Endothelial cell of umbilical vein (primary cell): ENCODE measurements at regions of chr2 and their contacts with region 1.

Region 1: DNA sequence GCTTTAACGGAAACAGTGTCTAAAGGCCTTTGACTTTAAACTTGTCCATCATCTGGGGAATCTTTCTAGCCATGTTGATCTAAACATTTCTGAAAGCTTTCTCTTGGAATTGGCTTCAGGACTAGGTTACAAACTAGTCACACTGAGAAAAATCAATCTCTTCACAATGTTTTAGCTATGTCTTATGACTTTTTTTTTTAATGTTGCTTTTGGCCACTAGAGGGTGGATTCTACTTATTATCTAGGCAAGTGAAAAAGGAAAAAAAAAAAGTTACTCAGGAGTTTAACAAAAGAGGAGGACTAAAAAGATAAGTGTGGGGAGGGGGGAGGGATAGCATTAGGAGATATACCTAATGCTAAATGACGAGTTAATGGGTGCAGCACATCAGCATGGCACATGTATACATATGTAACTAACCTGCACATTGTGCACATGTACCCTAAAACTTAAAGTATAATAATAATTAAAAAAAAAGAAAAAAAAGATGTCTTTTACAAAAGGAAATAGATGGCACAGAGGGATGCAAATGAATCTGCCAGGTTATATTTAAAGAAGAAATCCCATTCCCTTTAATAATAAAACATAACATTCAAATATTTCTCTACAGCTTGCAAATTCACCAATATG is 160.4 kb upstream of the PID1 start:
- DNase-seq: peak; percentile 54
- H3K4me3 ChIP-seq: no peak overlapping the region
- H3K27ac ChIP-seq: no peak overlapping the region
- H3K4me1 ChIP-seq: no peaks in the 10 kb centered on the region
- H3K27me3 ChIP-seq: no peaks in the 10 kb centered on the region
- CTCF ChIP-seq: peak; percentile 23 to 30
- POLR2A ChIP-seq: no peak

Region 2: GRCh38 chr2:227884511-227884947 is 1546.9 kb before region 1 on chr2:
- CTCF ChIA-PET with region 1: no interaction called
- POLR2A ChIA-PET with region 1: no interaction called
- dilution Hi-C with region 1: no loop called
- intact Hi-C with region 1: loop called (anchors 10 kb)
- DNase-seq: peak; percentile 77
- H3K4me3 ChIP-seq: no peak overlapping the region
- H3K27ac ChIP-seq: no peak overlapping the region
- H3K4me1 ChIP-seq: peaks cover 4% of the 10 kb centered on the region
- H3K27me3 ChIP-seq: no peaks in the 10 kb centered on the region
- CTCF ChIP-seq: peak; percentile 95 to 96
- POLR2A ChIP-seq: no peak

Region 3: GRCh38 chr2:229445019-229445418 is 13.6 kb after region 1 on chr2:
- CTCF ChIA-PET with region 1: interaction called, 22 read pairs
- POLR2A ChIA-PET with region 1: no interaction called
- dilution Hi-C with region 1: no loop called
- intact Hi-C with region 1: no loop called
- DNase-seq: peak; percentile 87
- H3K4me3 ChIP-seq: no peak overlapping the region
- H3K27ac ChIP-seq: peak overlapping the region; percentile 56
- H3K4me1 ChIP-seq: peaks cover 8% of the 10 kb centered on the region
- H3K27me3 ChIP-seq: peaks cover 0 to 2% of the 10 kb centered on the region in 2 experiments
- CTCF ChIP-seq: no peak
- POLR2A ChIP-seq: no peak

Region 4: GRCh38 chr2:229462144-229462543 is 30.7 kb after region 1 on chr2:
- CTCF ChIA-PET with region 1: interaction called, 12 read pairs
- POLR2A ChIA-PET with region 1: no interaction called
- dilution Hi-C with region 1: no loop called
- intact Hi-C with region 1: no loop called
- DNase-seq: no peak
- H3K4me3 ChIP-seq: no peak overlapping the region
- H3K27ac ChIP-seq: no peak overlapping the region
- H3K4me1 ChIP-seq: peaks cover 3% of the 10 kb centered on the region
- H3K27me3 ChIP-seq: no peaks in the 10 kb centered on the region
- CTCF ChIP-seq: no peak
- POLR2A ChIP-seq: no peak

Region 5: DNA sequence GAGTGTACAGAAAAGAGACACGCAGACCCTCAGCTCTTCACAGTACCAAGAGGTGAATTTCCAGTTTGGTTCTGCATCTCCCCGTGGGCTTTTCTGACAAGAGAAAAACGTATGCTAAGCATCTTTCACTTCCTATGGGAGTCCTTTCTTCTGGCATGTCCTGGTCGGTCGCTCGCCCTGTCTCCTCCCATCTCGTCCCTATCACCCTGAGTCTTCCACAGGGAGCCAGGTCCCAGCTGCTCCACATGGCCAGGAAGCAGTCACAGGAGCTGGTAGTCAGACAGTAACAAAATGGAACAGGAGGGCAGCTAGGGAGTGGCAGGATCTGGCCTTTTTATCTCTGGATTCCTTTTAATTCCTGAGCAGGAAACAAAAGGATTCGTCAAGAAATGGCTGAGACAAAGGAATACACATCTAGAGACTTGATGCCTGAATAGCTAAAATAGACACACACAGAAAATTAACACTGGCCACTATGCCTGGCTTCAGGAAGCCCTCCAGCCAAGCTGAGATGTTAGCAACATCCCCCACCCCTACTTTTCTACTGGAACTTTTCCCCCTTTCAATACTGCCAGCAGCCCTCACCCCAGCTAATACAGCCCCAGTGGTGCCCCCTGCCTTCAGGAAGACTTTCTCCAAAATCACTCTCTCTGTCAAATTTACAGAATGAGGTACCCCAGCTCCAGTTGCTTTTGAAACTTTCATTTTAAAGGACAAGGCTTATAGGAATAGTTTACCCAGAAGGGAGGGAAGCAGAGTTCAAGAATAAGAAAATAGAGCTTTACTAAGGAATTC is 146.8 kb after region 1 on chr2:
- CTCF ChIA-PET with region 1: interaction called, 403 read pairs
- POLR2A ChIA-PET with region 1: no interaction called
- dilution Hi-C with region 1: no loop called
- intact Hi-C with region 1: no loop called
- DNase-seq: no peak
- H3K4me3 ChIP-seq: no peak overlapping the region
- H3K27ac ChIP-seq: no peak overlapping the region
- H3K4me1 ChIP-seq: no peaks in the 10 kb centered on the region
- H3K27me3 ChIP-seq: no peaks in the 10 kb centered on the region
- CTCF ChIP-seq: no peak
- POLR2A ChIP-seq: no peak

Region 6: GRCh38 chr2:229714736-229715541 is 283.5 kb after region 1 on chr2:
- CTCF ChIA-PET with region 1: interaction called, 4 read pairs
- POLR2A ChIA-PET with region 1: no interaction called
- dilution Hi-C with region 1: no loop called
- intact Hi-C with region 1: loop called (anchors 5 kb)
- DNase-seq: peak; percentile 50
- H3K4me3 ChIP-seq: peak overlapping the region in 2 of 3 experiments; percentile 18 to 20
- H3K27ac ChIP-seq: no peak overlapping the region
- H3K4me1 ChIP-seq: peaks cover 6% of the 10 kb centered on the region
- H3K27me3 ChIP-seq: peaks cover 22 to 41% of the 10 kb centered on the region in 2 experiments
- CTCF ChIP-seq: no peak
- POLR2A ChIP-seq: no peak